ENCODE measurements at regions of chr13 and their contacts with region 1.

Region 1: GRCh38 chr13:43905435-43906031 is 25.8 kb downstream of the LACC1 start:
- DNase-seq: no peak
- H3K4me3 ChIP-seq: no peak overlapping the region
- H3K27ac ChIP-seq: no peak overlapping the region
- H3K4me1 ChIP-seq: no peaks in the 10 kb centered on the region
- H3K27me3 ChIP-seq: no peaks in the 10 kb centered on the region
- CTCF ChIP-seq: peak; percentile 74 to 87 (median 82)
- EP300 ChIP-seq: no peak
- POLR2A ChIP-seq: no peak

Region 2: GRCh38 chr13:43861863-43862262 is 43.7 kb before region 1 on chr13:
- in situ Hi-C with region 1: no loop called
- intact Hi-C with region 1: no loop called
- DNase-seq: no peak
- H3K4me3 ChIP-seq: no peak overlapping the region
- H3K27ac ChIP-seq: no peak overlapping the region
- H3K4me1 ChIP-seq: no peaks in the 10 kb centered on the region
- H3K27me3 ChIP-seq: no peaks in the 10 kb centered on the region
- CTCF ChIP-seq: no peak
- EP300 ChIP-seq: no peak
- POLR2A ChIP-seq: no peak

Region 3: GRCh38 chr13:44050450-44051063 is 145.0 kb after region 1 on chr13:
- in situ Hi-C with region 1: loop called in 2 of 4 experiments (anchors 10 to 25 kb)
- intact Hi-C with region 1: no loop called
- DNase-seq: no peak
- H3K4me3 ChIP-seq: no peak overlapping the region
- H3K27ac ChIP-seq: peak overlapping the region in 3 of 4 donors; percentile 38 to 62 (median 59)
- H3K4me1 ChIP-seq: peaks cover 4 to 24% (median 14%) of the 10 kb centered on the region in 4 donors
- H3K27me3 ChIP-seq: no peaks in the 10 kb centered on the region
- CTCF ChIP-seq: peak; percentile 78 to 92 (median 82)
- EP300 ChIP-seq: no peak
- POLR2A ChIP-seq: no peak

Region 4: GRCh38 chr13:44191504-44192171 is 286.1 kb after region 1 on chr13:
- in situ Hi-C with region 1: loop called in 1 of 4 experiments (anchors 25 kb)
- intact Hi-C with region 1: no loop called
- DNase-seq: peak; percentile 42
- H3K4me3 ChIP-seq: no peak overlapping the region
- H3K27ac ChIP-seq: peak overlapping the region in 1 of 4 donors; percentile 7
- H3K4me1 ChIP-seq: no peaks in the 10 kb centered on the region
- H3K27me3 ChIP-seq: no peaks in the 10 kb centered on the region
- CTCF ChIP-seq: peak; percentile 59 to 87 (median 73)
- EP300 ChIP-seq: no peak
- POLR2A ChIP-seq: no peak

Region 5: DNA sequence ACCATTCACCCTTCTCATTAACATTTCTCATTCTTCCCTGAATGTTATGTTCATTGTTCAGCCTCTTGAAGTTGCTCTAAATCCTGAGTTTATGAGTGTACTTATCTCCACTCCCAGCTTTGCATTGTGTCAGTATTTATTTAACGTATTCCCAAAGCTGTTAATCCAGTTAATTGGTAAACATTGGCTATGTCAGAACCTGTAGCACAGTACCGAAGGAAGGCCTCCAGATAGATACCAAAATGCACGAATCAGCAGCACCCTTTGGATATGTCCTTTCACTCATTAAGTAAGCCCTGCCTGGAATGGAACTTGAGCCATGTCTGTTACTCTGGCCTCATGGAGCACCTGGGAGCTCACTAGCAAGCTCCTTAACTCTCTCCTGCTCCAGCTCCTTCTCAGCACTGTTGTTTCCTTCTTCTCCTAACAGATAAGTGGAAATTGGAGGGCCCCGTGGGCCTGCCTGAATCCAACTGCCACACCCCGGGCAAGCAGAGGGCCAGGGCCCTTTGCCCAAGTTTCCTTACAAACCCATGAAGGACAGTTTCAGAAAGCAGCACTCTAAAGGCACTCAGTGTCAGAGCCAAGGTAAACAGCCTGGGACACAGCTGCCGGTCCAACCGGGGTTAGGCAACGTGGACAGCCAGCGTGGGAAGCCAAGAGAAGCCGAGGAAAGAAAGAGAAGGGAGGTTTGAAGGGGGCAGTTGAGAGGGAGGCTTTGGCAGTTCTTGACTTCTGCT is 313.1 kb after region 1 on chr13:
- in situ Hi-C with region 1: no loop called
- intact Hi-C with region 1: loop called (anchors 10 kb)
- DNase-seq: peak; percentile 60
- H3K4me3 ChIP-seq: no peak overlapping the region
- H3K27ac ChIP-seq: peak overlapping the region; percentile 47 to 87 (median 68)
- H3K4me1 ChIP-seq: peaks cover 18 to 52% (median 19%) of the 10 kb centered on the region in 4 donors
- H3K27me3 ChIP-seq: no peaks in the 10 kb centered on the region
- CTCF ChIP-seq: no peak
- EP300 ChIP-seq: no peak
- POLR2A ChIP-seq: no peak

Region 6: DNA sequence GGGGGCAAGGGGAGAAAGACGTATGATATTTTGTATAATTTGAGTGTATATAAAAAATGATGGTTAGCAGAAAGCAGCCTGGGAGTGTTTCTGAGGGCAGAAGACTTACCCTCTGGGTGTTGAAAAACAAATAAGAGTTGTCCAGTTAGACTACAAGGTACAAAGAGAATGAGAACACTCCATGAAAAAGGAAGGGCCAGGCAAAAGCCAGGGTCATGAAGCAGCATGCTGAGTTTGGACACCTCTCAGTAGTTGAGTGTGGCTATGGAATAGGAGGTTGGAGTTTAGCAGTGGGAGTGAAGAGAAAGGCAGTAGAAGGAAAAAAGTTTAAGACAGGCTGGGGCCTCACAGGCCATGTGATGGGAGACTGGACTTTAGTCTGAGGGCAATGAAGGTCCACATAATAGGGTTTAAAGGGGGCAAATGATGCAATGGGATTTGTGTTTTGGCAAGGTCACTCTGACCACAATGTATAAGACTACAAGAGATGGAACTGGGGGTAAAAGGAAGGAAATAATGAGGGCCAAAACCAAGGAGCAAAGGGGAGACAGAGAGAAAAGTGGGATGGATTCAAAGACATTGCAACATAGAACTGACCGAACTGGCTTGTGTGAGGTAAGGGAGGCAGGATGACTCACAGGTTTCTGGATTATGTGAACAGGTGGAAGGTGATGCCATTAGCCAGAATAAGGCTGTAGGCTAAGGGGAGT is 544.6 kb after region 1 on chr13:
- in situ Hi-C with region 1: loop called in 2 of 4 experiments (anchors 10 kb)
- intact Hi-C with region 1: no loop called
- DNase-seq: no peak
- H3K4me3 ChIP-seq: no peak overlapping the region
- H3K27ac ChIP-seq: no peak overlapping the region
- H3K4me1 ChIP-seq: peaks cover 0 to 8% (median 0%) of the 10 kb centered on the region in 4 donors
- H3K27me3 ChIP-seq: no peaks in the 10 kb centered on the region
- CTCF ChIP-seq: no peak
- EP300 ChIP-seq: no peak
- POLR2A ChIP-seq: no peak

Region 7: DNA sequence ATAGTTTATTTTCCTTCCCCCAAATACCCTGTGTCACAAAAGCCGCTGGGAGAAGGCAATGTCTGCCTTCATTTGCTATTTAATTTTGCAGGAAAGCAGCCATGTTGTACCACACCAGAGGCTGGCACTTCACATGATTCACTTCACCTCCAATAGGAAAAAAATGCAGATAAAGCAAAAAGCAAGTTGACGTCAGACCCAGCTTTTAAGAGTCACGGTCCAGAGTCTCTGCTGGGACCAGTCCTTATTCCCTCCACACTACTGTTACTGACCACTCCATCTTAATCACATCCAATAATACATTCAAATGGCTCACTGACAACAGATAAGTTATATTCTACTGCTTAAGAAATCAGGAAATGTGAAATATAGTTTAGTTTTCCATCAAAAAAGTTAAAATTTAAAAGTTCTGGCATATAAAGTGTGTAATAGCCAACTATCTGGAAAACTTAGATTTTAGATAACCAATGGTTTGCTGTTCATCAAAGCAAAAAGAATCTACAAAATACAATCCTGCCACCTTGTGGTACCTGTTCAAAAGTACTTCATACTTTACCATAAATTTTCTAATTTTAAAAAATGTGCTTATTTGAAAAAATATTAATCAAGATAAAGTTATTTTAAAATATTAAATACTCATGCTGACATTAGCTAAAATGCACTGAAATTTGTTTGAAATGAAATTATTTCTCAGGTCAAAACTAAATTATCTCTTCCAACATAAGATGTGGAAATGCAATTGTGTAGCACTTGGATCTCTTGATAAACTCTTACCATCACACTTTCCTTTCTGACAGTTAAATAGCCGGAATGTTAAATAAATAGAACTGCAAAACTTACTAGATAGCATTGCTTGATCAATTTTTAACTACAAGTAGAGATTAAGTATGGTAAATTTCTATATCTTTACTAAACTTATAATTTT is 565.4 kb after region 1 on chr13:
- in situ Hi-C with region 1: loop called in 1 of 4 experiments (anchors 10 kb)
- intact Hi-C with region 1: no loop called
- DNase-seq: no peak
- H3K4me3 ChIP-seq: no peak overlapping the region
- H3K27ac ChIP-seq: no peak overlapping the region
- H3K4me1 ChIP-seq: peaks cover 0 to 9% (median 3%) of the 10 kb centered on the region in 4 donors
- H3K27me3 ChIP-seq: no peaks in the 10 kb centered on the region
- CTCF ChIP-seq: peak; percentile 45 to 68 (median 50)
- EP300 ChIP-seq: no peak
- POLR2A ChIP-seq: no peak

Region 8: DNA sequence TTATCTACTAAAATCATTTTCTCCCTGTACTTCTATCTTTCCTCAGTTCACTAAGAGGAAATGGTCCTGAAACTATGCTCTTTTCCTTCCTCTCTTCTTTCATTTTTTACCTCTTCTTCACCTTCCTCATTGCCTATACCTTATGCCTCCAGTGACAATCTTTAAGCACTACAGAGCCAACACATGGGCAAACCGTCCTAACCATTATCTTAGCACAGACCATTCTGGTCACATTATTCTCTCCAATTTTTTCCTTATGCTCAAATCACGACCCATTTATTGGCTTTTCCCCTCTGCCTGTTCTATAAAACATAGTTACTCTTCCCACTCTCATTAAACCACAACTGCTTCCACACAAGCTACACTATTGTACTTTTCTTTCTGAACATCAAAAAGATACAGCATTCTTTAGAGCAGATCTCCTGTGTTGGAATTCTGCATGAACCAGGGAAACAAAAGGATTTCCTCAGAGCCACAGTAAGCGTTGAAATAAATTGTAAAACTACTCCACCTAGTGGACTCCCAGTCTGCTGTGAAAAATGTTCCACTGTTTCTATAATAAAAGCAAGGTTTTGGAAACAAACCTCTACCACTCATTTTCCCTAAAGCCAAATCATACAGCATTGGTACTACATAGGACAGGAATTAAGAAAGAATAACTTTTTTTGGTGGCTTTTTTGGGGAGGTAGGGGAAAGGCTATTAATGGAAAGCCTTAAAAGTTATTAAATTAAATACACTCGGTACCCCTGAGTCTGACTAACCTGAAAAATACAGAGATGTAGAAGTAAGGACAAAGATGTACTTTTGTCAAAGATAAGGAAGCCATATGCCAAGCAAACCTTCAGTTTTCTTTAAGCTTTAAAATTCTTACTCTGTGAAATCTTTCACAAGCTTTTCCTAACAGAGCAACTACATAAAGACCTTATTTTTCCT is 1064.3 kb after region 1 on chr13:
- in situ Hi-C with region 1: loop called (anchors 25 kb)
- intact Hi-C with region 1: no loop called
- DNase-seq: no peak
- H3K4me3 ChIP-seq: no peak overlapping the region
- H3K27ac ChIP-seq: peak overlapping the region in 3 of 4 donors; percentile 30 to 52 (median 43)
- H3K4me1 ChIP-seq: peaks cover 0 to 29% (median 4%) of the 10 kb centered on the region in 4 donors
- H3K27me3 ChIP-seq: no peaks in the 10 kb centered on the region
- CTCF ChIP-seq: peak; percentile 75 to 87 (median 79)
- EP300 ChIP-seq: no peak
- POLR2A ChIP-seq: no peak

Measured in transverse colon (tissue), 4 donors.